ENCODE measurements at regions of chr14 and their contacts with region 1.

Region 1: DNA sequence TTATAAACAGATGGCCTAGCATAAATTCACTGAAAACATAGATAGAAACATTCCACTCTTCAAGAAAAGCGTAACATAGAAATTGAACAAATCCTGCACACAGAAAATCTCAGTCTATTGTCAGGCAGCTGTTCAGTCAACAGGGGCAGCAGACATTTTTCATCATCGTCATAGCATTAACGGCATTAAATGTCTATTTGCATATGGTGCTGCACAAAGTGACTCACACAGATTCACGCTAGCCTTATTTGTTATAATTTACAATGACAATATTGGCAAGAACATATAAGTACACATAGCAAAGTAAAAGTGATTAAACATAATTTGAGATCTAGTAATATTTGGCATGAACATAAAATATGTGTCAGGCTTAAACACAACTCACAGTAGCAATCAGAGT is 95.7 kb downstream of the CEP128 start:
- DNase-seq: no peak
- ATAC-seq: no peak

Region 2: GRCh38 chr14:78959674-78960264 is 1886.1 kb before region 1 on chr14:
- intact Hi-C with region 1: loop called (anchors 10 kb)
- DNase-seq: peak; percentile 88
- ATAC-seq: peak; percentile 77

Region 3: GRCh38 chr14:80055667-80056496 is 790.0 kb before region 1 on chr14:
- intact Hi-C with region 1: loop called (anchors 10 kb)
- DNase-seq: peak; percentile 60
- ATAC-seq: peak; percentile 79

Region 4: DNA sequence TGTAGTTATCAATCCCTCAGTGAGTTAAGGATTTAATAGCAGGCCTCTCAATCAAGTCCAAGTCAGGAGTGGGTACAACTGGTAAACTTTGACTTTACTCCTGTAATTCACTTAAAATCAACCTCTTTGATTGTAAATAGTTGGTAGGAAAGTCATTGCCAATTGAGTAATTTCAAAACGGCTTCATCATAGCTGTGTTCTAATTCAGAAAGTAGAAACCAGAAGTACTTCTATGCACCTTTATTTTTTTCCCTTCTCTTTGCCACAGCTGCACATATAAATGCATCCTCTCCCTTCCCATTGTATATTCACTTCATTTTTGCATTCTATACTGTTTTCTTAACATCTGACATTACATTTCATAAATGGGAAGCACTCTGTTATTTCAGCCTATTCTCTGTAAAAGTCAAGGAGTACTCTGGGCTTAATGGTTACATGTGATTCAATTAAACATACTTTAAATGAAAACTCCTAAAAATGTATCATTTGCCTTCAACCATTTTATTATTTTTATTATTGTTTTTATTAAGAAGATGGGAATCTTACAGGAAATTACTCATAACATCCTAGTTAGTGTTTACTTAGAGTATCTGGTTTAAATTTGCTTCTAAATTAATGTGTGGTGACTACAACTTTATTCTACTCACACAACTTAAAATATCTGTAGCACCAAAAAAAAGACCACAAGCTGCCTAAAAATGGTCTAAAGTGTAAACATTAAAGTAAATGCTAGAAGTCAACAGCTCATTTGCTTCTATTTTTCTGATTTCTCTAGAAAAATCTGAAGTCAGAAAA is 75.5 kb before region 1 on chr14:
- intact Hi-C with region 1: no loop called
- DNase-seq: no peak
- ATAC-seq: no peak